Posterior vena cava (tissue), 2 donors: ENCODE measurements at regions of chr7 and their contacts with region 1.

Region 1: DNA sequence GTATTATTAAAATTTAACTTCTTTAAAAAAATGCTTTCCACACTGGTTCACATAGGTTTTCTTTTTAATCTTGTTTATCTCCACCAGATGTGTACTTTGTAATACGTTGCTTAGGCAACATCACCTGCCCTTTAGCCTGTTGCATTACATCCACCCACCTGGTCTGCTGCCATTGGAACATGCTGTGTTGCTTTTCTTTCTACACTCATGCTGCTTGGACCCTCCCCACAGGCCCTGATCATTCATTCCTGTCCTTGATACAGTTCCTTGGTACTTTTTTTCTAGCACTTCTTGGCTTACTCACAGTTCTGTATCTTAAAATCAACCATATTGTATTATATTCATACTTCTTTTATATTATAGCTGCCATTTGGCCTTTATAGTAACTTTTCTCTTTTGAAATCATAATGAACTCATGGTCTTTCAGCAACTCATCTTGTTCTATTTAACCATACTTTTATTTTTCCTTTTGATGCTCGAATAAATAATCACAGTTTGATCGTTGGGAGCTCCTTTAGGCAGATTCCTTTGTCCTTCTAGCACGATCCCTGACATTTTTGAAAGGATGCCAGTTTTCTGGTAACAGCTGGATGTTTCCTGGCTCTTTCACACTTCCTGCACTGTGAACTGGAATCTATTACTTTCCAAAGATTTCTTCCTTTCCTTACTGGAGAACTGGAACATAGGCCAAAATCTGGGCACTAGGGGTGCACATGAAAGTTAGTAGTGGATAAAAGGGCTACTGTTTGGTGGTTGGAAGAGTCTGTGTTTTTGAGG is 125.1 kb downstream of the CDK14 start:
- DNase-seq: no peak

Region 2: DNA sequence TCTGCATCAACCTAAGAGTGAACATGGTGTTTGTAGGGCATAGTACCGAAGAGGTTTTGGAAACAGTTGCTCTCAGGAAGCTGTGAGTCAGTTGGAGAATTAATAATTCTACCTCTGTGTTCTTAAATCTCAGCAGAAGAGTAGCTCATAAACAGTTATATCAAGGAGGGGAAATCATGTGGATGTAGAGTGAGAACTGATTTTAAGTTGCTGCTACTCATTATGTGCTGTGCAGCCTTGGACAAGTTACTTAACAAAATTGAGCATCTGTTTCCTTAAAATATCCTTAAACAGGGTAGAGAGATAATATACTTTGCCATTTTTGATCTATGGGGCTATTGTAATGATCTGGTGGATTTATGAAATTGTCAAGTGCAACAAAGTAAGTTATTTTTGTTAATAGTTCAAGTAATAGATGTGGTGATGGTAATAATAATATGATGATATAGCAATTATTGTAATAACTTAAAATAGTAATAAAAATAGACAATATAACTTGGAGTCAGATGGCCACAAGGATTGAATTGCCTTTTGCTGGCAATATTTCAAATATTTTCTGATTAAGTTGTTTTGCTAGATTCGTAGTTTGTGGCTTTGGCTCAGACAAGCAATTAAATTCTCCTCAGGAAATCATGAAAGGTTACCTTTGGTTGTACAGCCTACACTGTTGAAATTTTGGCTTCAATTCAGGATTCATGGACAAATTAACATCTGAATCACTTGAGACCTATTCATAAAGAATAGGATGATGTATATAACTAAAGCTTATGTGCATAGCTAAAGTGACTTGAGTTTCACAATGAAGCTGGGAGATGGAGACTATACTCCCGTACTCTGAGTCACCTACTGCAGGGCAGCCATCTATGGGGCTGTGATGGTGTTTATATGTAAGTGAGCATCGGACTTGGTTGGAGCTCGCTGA is 103.5 kb after region 1 on chr7:
- intact Hi-C with region 1: loop called in 1 of 2 experiments (anchors 5 kb)
- DNase-seq: no peak